ENCODE measurements at regions of chr4 and their contacts with region 1.

Region 1: DNA sequence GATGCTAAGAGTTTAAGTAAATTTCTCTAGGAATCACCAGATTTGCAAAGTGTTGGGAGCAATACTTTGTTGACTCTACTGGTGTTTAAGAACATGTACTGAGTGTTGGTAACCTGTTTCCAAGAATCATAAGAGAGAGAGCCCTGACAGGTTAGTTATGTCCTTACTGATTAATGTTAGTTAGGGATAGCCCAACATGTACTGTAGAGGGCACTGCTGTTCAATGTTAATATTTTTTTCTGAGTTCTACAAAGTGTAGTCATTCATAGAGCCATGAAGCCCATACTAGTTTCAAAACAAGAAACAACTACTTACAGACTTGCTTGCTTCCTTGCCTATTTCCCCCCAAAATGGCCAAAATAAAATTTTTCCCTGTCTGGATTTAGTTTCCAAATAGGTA is 11.9 kb downstream of the TMPRSS11D start:
- DNase-seq: no peak
- H3K4me3 ChIP-seq: no peak overlapping the region
- H3K27ac ChIP-seq: no peak overlapping the region
- H3K4me1 ChIP-seq: no peaks in the 10 kb centered on the region
- H3K27me3 ChIP-seq: no peaks in the 10 kb centered on the region
- CTCF ChIP-seq: peak; percentile 59

Region 2: GRCh38 chr4:67291644-67292043 is 580.2 kb before region 1 on chr4:
- CTCF ChIA-PET with region 1: no interaction called
- POLR2A ChIA-PET with region 1: no interaction called
- intact Hi-C with region 1: no loop called
- DNase-seq: no peak
- H3K4me3 ChIP-seq: no peak overlapping the region
- H3K27ac ChIP-seq: no peak overlapping the region
- H3K4me1 ChIP-seq: 0 out of 2 replicates have a peak, but pooled peaks cover 4% of the 10 kb centered on the region
- H3K27me3 ChIP-seq: no peaks in the 10 kb centered on the region
- CTCF ChIP-seq: no peak

Region 3: DNA sequence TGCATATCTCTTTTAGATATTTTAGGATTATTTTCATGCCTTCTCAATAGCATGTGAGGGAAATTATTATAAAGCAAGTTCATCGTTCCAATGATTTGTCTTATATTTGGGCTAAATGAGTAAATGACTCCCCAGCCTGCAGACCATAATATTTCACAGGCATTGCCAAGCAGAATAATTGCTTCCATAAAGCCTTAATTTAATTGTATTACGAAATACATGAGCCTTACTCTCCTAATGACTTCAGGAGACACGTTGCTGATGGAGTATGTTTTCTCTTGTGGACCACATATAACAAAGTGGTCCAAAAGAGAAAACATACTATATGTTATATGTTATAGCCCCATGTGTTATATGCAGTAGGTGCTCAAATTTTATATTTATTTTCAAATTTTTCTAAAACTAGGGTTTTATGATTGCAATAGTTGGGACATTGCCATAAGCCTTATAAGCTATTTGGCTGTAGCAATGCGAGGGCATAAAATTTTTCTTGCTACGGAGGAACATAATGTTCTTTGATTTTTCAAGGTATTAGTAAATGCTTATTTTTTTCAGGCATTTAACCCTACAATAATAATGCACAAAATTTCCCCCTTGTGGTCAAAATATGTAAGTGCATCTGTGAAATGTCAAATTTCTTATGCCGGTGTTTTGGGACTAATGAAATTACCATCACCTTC is 38.2 kb after region 1 on chr4:
- CTCF ChIA-PET with region 1: no interaction called
- POLR2A ChIA-PET with region 1: no interaction called
- intact Hi-C with region 1: loop called (anchors 1 kb)
- DNase-seq: no peak
- H3K4me3 ChIP-seq: no peak overlapping the region
- H3K27ac ChIP-seq: no peak overlapping the region
- H3K4me1 ChIP-seq: no peaks in the 10 kb centered on the region
- H3K27me3 ChIP-seq: no peaks in the 10 kb centered on the region
- CTCF ChIP-seq: peak; percentile 76

Measured in PC-9 (cell line).